Activated CD4-positive, alpha-beta memory T cell treated with anti-CD3 and anti-CD28 coated beads for 36 hours (primary cell): ENCODE measurements at regions of chr16 and their contacts with region 1.

Region 1: DNA sequence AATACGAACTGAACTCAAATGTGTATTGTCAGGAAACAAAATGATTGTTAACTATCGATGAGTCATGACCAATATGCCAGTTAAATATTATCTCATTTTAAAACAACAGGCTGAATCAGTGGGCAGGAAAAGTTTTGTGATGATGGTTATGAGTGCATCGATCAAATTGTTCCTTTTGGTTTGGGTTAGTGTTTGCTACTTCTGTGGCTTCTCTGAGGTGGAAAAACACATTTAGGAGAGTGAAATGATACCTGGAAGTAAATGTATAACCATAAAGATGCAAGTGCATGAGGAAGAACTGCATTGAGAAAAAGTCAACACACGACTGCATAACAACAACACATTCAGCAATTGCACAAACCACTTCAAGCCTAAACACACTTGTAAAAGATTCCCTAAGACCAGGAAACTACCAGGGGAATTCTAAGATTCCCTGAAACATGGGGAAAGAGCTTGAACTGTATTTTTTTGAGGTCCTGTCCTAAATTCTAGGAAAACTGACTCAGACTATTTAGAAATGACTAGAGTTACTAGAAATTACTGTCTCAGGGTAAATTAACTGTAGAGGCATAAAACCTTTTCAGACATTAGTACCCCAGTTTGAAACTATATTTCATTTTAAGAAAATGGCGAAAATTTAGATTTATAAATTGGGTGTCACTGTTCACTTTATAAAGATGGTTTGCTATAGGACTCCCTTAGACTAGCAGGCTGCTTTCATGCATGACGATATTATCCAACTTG is 44.8 kb downstream of the CDYL2 start:
- DNase-seq: no peak
- H3K4me3 Mint-ChIP-seq: peak overlapping the region; percentile 35
- H3K27ac Mint-ChIP-seq: peak overlapping the region; percentile 82
- H3K4me1 Mint-ChIP-seq: peaks cover 21% of the 10 kb centered on the region
- H3K27me3 Mint-ChIP-seq: no peaks in the 10 kb centered on the region

Region 2: DNA sequence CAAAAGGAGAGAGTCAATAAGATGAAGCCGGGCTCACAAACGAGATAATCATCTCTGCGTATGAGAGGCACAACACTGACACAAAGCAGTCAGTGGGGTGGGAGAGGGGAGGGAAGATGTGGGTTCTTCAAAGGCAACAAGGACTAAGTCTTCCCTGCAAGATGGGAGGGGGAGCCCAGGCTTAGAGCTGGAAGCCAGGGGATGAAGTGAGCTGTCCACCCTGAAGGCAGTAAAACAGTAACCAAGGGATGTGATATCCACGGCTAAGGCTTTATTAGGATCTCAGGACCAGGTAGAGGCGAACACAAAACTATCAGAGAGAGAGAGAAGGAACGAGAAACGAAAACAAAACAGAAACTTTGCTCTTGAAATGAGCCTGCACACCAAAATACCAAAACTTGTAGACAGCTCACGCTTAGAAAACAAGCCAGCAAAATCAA is 102.9 kb before region 1 on chr16:
- CTCF ChIA-PET with region 1: no interaction called
- POLR2A ChIA-PET with region 1: no interaction called
- intact Hi-C with region 1: loop called (anchors 2 kb)
- DNase-seq: peak; percentile 62
- H3K4me3 Mint-ChIP-seq: peak overlapping the region; percentile 73
- H3K27ac Mint-ChIP-seq: peak overlapping the region; percentile 76
- H3K4me1 Mint-ChIP-seq: peaks cover 29% of the 10 kb centered on the region
- H3K27me3 Mint-ChIP-seq: no peaks in the 10 kb centered on the region

Region 3: DNA sequence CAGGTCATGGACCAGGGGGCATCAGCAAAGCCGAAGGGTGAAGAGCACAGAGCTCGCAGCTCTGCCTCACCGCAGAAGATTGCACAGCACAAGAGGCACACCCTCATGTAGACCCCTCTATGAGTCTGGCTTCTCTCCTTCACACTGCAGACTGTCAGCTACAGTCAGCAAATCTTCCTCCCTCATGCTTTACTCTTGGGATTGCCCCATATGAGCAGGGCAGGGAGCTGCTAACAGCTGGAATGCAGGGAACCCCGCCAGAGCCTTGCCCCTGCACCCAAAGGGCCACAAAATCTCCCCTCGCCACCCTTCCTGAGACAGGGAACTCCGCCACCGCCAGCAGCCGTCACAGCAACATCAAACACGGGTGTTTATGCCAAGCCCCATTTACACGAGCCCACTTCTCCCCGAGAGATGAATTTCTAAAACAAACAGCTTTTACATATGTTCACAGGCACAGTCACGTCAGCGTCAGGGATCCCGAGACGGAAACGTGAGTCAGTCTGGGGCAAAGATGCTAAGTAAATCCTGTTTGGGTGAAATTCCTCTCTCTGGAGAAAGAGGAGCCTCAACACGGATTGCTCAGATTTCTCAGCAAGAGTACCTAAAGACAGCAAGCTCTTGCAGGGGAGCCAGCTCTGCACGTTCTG is 77.0 kb before region 1 on chr16:
- CTCF ChIA-PET with region 1: no interaction called
- POLR2A ChIA-PET with region 1: no interaction called
- intact Hi-C with region 1: loop called (anchors 1 kb)
- DNase-seq: no peak
- H3K4me3 Mint-ChIP-seq: no peak overlapping the region
- H3K27ac Mint-ChIP-seq: no peak overlapping the region
- H3K4me1 Mint-ChIP-seq: peaks cover 23% of the 10 kb centered on the region
- H3K27me3 Mint-ChIP-seq: no peaks in the 10 kb centered on the region

Region 4: GRCh38 chr16:80700558-80700957 is 59.0 kb before region 1 on chr16:
- CTCF ChIA-PET with region 1: no interaction called
- POLR2A ChIA-PET with region 1: no interaction called
- intact Hi-C with region 1: no loop called
- DNase-seq: no peak
- H3K4me3 Mint-ChIP-seq: no peak overlapping the region
- H3K27ac Mint-ChIP-seq: no peak overlapping the region
- H3K4me1 Mint-ChIP-seq: peaks cover 26% of the 10 kb centered on the region
- H3K27me3 Mint-ChIP-seq: no peaks in the 10 kb centered on the region

Region 5: DNA sequence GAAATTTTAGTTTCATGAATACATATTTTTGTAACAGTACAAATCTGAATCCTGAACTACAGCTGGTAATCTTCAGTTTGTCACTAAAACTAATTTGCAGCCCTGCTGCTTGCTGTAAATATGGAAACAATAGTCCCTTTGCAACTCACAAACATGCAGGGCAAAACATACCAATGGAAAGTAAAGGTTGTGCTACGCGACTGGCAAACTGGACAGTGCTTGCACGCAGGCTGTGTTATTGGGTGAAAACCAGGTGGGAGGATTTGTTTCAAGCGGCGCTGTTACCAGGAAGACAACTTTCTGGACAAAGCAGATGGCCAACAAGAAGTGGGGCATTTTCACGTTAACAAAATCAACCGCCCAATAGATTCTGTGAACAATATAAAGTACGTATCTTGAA is 48.7 kb before region 1 on chr16:
- CTCF ChIA-PET with region 1: no interaction called
- POLR2A ChIA-PET with region 1: no interaction called
- intact Hi-C with region 1: no loop called
- DNase-seq: no peak
- H3K4me3 Mint-ChIP-seq: no peak overlapping the region
- H3K27ac Mint-ChIP-seq: no peak overlapping the region
- H3K4me1 Mint-ChIP-seq: peaks cover 6% of the 10 kb centered on the region
- H3K27me3 Mint-ChIP-seq: no peaks in the 10 kb centered on the region

Region 6: DNA sequence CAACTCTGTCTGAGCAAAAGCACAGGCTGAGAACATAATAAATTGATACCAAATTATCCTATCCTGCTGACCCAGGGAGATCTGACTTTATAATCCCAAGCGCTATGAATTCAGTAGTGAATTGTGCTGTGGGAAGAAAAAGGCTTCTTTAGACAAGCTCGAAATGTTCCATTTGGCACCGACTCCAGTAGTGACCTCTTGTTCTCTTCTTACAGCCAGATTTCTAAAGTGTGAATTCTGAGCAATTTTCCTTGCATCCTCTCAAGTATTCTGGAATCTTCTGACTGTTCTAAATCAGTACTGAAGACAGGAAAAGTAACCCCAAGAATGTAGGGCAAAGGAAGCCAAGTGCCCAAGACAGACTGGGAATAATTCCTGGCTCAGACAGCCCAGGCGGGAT is 13.4 kb before region 1 on chr16:
- CTCF ChIA-PET with region 1: no interaction called
- POLR2A ChIA-PET with region 1: no interaction called
- intact Hi-C with region 1: loop called (anchors 2 kb)
- DNase-seq: no peak
- H3K4me3 Mint-ChIP-seq: no peak overlapping the region
- H3K27ac Mint-ChIP-seq: no peak overlapping the region
- H3K4me1 Mint-ChIP-seq: peaks cover 35% of the 10 kb centered on the region
- H3K27me3 Mint-ChIP-seq: no peaks in the 10 kb centered on the region

Region 7: DNA sequence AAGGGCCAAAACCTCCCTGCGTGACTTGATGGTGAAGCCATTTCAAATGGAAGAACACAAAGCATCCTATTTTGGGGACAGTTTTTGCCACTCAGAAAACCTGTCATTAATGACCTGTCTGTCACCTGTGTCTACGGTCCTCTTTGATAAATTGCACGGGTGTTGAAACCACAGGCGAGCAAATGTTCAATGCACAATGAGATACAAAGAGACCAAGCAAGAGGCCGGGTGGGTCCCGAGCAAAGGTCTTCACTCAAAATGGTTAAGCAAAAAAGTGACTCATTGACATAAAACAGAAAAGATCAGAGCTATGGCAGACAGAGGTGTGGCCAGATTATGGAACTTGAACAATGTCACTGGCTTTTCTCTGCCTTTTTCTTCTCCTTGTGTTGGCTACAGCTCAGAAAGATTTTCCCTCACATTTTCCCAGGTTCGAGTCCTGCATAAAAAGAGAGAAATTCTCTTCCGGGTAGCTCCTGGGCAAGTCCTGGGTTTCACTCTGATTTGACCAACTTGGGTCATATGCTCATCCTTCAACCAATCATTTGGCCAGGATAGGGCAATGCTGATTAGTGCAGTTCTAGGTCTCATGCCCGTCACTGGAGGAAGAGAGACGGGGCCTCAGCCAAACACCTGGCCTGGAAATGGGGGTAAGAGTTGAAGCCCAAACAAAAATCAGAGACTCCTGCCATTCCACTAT is 154.9 kb after region 1 on chr16:
- CTCF ChIA-PET with region 1: no interaction called
- POLR2A ChIA-PET with region 1: no interaction called
- intact Hi-C with region 1: no loop called
- DNase-seq: no peak
- H3K4me3 Mint-ChIP-seq: no peak overlapping the region
- H3K27ac Mint-ChIP-seq: no peak overlapping the region
- H3K4me1 Mint-ChIP-seq: no peaks in the 10 kb centered on the region
- H3K27me3 Mint-ChIP-seq: peaks cover 2% of the 10 kb centered on the region